ENCODE measurements at regions of chr5 and their contacts with region 1.

Region 1: DNA sequence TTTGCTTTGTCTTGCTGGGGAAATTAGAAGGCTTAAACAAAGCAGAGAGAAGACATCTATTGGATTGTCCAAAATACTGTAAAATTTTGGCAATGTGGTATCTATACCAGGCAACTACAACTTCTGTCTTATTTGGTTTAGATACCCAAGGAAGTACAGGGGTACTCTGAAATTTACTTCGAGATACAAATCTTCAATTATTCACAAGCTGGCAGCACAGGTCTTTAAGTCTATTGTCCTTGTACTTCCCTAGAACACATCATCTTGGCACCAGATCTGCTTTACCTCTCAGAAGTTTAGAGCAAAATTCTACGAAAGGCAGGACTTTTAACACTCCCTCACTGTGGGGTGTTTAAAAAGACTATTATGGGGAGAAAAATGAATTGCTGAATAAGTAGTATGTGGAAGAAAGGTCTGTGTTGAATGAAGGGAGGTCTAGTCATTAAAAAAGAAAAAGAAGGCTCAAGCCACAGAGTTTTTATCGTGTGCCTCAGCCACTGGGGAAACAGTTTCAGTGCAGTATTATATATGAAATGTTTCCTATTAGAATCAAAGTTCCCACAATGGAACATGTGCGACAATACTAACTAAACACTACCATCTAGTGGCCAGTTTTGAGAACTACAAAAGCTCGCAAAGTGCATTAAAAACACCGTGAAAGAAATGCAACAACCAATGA is 93.7 kb downstream of the PDE4D start:
- DNase-seq: no peak
- ATAC-seq: peak; percentile 73 to 74
- H3K4me3 ChIP-seq: peak overlapping the region; percentile 15
- H3K27ac ChIP-seq: no peak overlapping the region
- H3K4me1 ChIP-seq: peaks cover 2% of the 10 kb centered on the region
- H3K27me3 ChIP-seq: no peaks in the 10 kb centered on the region

Region 2: GRCh38 chr5:59506285-59506877 is 293.4 kb before region 1 on chr5:
- intact Hi-C with region 1: loop called in 1 of 4 experiments (anchors 10 kb)
- DNase-seq: no peak
- ATAC-seq: no peak
- H3K4me3 ChIP-seq: no peak overlapping the region
- H3K27ac ChIP-seq: no peak overlapping the region
- H3K4me1 ChIP-seq: no peaks in the 10 kb centered on the region
- H3K27me3 ChIP-seq: no peaks in the 10 kb centered on the region

Region 3: DNA sequence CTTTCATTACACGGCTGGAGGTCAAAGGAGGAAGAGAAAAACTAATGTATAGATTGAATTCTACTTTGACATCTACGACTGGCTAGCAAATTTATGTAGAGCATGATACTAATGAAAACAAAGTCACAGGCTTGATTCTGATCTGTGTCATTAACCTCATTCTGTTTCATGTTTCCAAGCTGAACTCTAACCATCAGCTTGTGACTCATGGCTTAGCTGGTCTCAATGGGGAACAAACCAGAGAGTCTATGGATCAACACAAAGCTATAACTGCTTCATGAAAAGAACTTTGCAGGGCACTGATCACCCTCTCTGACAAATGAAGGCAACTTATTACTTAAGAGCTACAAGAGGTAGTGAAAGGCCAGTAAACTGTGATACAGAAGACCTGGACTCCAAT is 117.3 kb after region 1 on chr5:
- intact Hi-C with region 1: no loop called
- DNase-seq: no peak
- ATAC-seq: no peak
- H3K4me3 ChIP-seq: no peak overlapping the region
- H3K27ac ChIP-seq: no peak overlapping the region
- H3K4me1 ChIP-seq: no peaks in the 10 kb centered on the region
- H3K27me3 ChIP-seq: no peaks in the 10 kb centered on the region

Region 4: DNA sequence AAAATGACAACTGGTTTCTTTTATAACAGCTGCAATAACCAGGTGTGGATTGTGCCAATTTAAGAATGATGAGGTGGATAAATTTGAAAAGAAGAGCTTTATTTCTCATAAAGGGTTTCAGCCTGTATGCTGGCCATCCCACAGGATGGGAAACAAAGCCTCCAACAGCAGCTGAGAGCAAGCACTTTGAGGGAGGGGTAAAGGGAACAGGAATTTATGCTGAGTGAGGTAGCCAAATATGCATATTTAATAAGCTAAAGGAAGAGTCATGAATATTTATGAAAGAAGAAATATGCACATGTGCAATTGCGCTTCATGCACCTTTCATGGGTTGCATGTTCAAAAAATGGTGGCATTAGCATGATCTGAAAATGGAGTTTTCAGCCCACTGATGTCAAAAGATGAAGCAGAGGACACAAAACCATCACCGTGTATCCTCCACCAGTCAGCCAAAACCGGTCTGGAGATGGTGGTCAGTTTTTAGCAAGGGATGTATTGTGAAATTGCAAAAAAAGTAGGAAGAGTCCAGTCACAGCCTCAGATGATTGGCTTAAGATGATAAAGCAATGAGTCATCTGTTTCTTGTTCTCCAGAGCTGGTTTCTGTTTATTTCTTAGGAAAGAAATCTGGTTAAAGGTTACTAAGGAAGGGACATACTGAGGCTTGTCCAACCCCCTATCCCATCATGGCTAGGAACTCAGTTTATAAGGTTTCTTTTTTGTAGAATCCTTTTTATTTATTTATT is 852.2 kb after region 1 on chr5:
- intact Hi-C with region 1: no loop called
- DNase-seq: no peak
- ATAC-seq: no peak
- H3K4me3 ChIP-seq: no peak overlapping the region
- H3K27ac ChIP-seq: no peak overlapping the region
- H3K4me1 ChIP-seq: no peaks in the 10 kb centered on the region
- H3K27me3 ChIP-seq: no peaks in the 10 kb centered on the region

Measured in right cardiac atrium (tissue), 5 donors.